H1 (cell line): ENCODE measurements at regions of chr1 and their contacts with region 1.

Region 1: GRCh38 chr1:220873868-220874655 is 5.2 kb upstream of the HLX start:
- DNase-seq: peak in 1 of 2 experiments; percentile 74
- H3K4me3 ChIP-seq: no peak overlapping the region
- H3K27ac ChIP-seq: no peak overlapping the region
- H3K4me1 ChIP-seq: peaks cover 3 to 11% (median 7%) of the 10 kb centered on the region in 4 experiments
- H3K27me3 ChIP-seq: peaks cover 37 to 49% (median 45%) of the 10 kb centered on the region in 4 experiments
- CTCF ChIP-seq: peak; percentile 41 to 75 (median 73)
- EP300 ChIP-seq: no peak
- POLR2A ChIP-seq: no peak
- RAD21 ChIP-seq: peak; percentile 86 to 91

Region 2: GRCh38 chr1:220887520-220888416 is 13.7 kb after region 1 on chr1:
- CTCF ChIA-PET with region 1: interaction called, 32 read pairs
- POLR2A ChIA-PET with region 1: interaction called, 12 read pairs
- DNase-seq: peak in 1 of 2 experiments; percentile 73
- H3K4me3 ChIP-seq: peak overlapping the region in 3 of 4 experiments; percentile 6 to 47 (median 10); a peak in 4 of 8 replicates
- H3K27ac ChIP-seq: no peak overlapping the region
- H3K4me1 ChIP-seq: peaks cover 4 to 44% (median 22%) of the 10 kb centered on the region in 4 experiments
- H3K27me3 ChIP-seq: peaks cover 99 to 100% (median 100%) of the 10 kb centered on the region in 4 experiments
- CTCF ChIP-seq: no peak; a peak in 1 of 4 replicates
- EP300 ChIP-seq: no peak
- POLR2A ChIP-seq: no peak
- RAD21 ChIP-seq: peak; percentile 10 to 19; a peak in 1 of 4 replicates

Region 3: DNA sequence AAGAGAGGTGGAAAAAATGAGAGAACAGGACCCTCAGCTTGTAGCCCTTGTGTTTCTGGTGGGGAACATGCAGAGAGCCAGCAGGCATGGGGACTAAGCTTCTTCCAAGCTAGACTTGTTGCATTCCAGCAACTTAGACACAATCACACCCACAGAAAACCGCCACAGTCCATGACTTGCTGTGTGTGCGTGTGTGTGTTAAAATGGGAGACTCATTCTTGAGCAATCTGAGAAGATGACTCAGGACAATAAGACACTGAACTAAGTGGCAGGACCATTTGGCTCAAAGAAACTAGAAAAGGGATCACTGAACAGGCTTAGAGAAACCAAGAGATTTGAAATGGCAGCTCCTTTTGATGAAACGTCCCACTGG is 83.2 kb after region 1 on chr1:
- CTCF ChIA-PET with region 1: no interaction called
- POLR2A ChIA-PET with region 1: no interaction called
- DNase-seq: no peak
- H3K4me3 ChIP-seq: no peak overlapping the region
- H3K27ac ChIP-seq: no peak overlapping the region
- H3K4me1 ChIP-seq: no peaks in the 10 kb centered on the region
- H3K27me3 ChIP-seq: no peaks in the 10 kb centered on the region
- CTCF ChIP-seq: no peak
- EP300 ChIP-seq: no peak
- POLR2A ChIP-seq: no peak
- RAD21 ChIP-seq: no peak